Transverse colon (tissue), 4 donors: ENCODE measurements at regions of chr15 and their contacts with region 1.

Region 1: GRCh38 chr15:38817427-38818156 is 253.0 kb upstream of the RASGRP1 start:
- DNase-seq: peak; percentile 90
- H3K4me3 ChIP-seq: no peak overlapping the region
- H3K27ac ChIP-seq: no peak overlapping the region
- H3K4me1 ChIP-seq: peaks cover 0 to 9% (median 0%) of the 10 kb centered on the region in 4 donors
- H3K27me3 ChIP-seq: no peaks in the 10 kb centered on the region
- CTCF ChIP-seq: peak; percentile 99
- EP300 ChIP-seq: no peak
- POLR2A ChIP-seq: no peak

Region 2: DNA sequence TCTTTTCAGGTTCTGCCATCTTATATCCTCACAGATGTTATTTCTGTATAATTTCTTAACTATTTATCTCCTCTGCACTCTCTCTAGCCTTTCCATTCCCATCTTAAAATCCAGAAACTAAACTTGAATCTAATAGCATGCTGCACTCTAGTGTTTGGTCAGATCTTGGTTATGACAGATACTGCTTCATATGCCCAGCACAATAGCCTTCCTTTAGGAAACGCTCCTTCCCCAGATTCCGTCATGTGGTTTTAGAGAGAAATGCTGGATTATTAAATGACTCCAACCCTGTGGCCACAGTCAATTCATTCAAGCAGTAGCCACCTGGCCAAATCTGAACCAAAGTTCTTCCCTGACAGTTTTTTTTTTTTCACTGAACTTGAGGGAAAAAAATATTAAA is 272.4 kb before region 1 on chr15:
- in situ Hi-C with region 1: no loop called
- intact Hi-C with region 1: no loop called
- DNase-seq: no peak
- H3K4me3 ChIP-seq: no peak overlapping the region
- H3K27ac ChIP-seq: no peak overlapping the region
- H3K4me1 ChIP-seq: no peaks in the 10 kb centered on the region
- H3K27me3 ChIP-seq: no peaks in the 10 kb centered on the region
- CTCF ChIP-seq: no peak
- EP300 ChIP-seq: no peak
- POLR2A ChIP-seq: no peak

Region 3: GRCh38 chr15:38991126-38991525 is 173.5 kb after region 1 on chr15:
- in situ Hi-C with region 1: loop called in 2 of 4 experiments (anchors 10 to 25 kb)
- intact Hi-C with region 1: no loop called
- DNase-seq: no peak
- H3K4me3 ChIP-seq: no peak overlapping the region
- H3K27ac ChIP-seq: no peak overlapping the region
- H3K4me1 ChIP-seq: no peaks in the 10 kb centered on the region
- H3K27me3 ChIP-seq: no peaks in the 10 kb centered on the region
- CTCF ChIP-seq: peak; percentile 43 to 61 (median 48)
- EP300 ChIP-seq: no peak
- POLR2A ChIP-seq: no peak

Region 4: GRCh38 chr15:39312984-39313383 is 495.4 kb after region 1 on chr15:
- in situ Hi-C with region 1: loop called in 1 of 4 experiments (anchors 25 kb)
- intact Hi-C with region 1: no loop called
- DNase-seq: peak; percentile 63
- H3K4me3 ChIP-seq: no peak overlapping the region
- H3K27ac ChIP-seq: peak overlapping the region in 2 of 4 donors; percentile 70 to 77
- H3K4me1 ChIP-seq: peaks cover 0 to 36% (median 2%) of the 10 kb centered on the region in 4 donors
- H3K27me3 ChIP-seq: no peaks in the 10 kb centered on the region
- CTCF ChIP-seq: peak; percentile 24 to 68 (median 47)
- EP300 ChIP-seq: peak; percentile 30
- POLR2A ChIP-seq: no peak

Region 5: DNA sequence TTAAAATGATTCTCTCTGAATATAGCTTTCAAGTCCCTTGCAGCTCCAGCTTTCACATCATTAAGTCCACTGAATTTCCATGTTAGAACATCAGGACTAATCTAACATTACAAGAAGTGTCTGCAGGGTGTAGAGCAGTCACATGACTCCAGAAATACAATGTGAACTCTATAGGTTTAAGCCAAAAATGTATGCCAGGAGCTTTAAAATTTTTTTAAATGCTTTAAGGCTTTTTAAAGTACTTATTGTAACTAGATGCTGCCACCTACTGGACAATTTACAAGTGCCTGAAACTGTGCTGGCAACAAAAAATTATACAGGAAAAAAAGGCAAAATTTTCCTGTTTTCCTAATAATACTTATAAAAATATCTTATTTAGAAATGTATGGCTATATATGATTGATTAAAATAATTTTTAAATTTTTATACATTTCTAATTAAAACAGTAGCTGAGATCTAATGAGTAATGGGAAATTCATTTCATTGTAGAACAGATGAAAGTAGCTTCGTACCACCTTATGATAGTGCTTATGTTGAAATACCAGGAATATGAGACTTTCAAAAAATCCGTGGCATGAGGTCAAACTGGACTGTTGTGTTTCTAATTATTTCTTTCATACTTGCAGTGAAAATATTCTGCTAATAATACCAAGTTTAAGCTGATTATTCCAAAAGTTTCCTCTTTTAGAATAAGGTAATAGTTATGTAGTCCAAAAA is 939.4 kb after region 1 on chr15:
- in situ Hi-C with region 1: loop called in 2 of 4 experiments (anchors 25 kb)
- intact Hi-C with region 1: loop called (anchors 2 kb)
- DNase-seq: no peak
- H3K4me3 ChIP-seq: no peak overlapping the region
- H3K27ac ChIP-seq: no peak overlapping the region
- H3K4me1 ChIP-seq: peaks cover 0 to 6% (median 2%) of the 10 kb centered on the region in 4 donors
- H3K27me3 ChIP-seq: no peaks in the 10 kb centered on the region
- CTCF ChIP-seq: peak; percentile 71 to 93 (median 85)
- EP300 ChIP-seq: no peak
- POLR2A ChIP-seq: no peak